Posterior vena cava (tissue), 2 donors: ENCODE measurements at regions of chr5 and their contacts with region 1.

Region 1: DNA sequence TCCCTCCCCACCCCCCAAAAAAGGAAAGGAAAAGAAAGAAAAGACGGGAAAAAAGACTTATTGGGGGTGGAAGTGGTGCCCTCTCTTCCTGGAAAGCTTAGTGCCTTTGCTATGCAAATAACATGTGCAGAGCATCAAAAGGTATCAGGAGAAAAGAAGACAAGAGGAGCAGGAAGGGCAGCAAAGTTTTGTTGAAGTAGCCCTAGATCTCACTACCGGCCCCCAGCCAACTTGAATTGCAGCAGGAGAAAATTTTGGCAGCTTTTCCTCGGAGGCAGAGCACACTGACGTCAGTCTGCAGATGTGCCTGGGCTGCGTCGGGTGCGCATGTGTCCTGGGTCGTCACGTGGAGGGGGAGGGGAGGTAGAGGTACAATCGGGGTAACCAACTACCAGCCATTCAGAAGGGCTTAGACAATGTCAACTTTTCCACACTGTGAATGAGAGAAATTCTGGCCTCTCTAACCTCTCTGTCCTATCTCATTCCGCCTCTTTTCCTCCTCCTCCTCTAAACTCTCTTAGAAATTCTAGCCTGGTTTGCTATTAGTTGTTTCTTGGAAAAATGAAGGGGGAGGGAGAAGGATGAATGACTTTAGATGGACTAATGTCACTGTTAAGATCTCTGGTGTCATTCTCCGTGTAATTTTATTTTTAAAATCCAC is at the start of gene ADAMTS6:
- DNase-seq: peak; percentile 97
- total RNA-seq, gene ADAMTS6: 5.5 to 14.4 TPM

Region 2: DNA sequence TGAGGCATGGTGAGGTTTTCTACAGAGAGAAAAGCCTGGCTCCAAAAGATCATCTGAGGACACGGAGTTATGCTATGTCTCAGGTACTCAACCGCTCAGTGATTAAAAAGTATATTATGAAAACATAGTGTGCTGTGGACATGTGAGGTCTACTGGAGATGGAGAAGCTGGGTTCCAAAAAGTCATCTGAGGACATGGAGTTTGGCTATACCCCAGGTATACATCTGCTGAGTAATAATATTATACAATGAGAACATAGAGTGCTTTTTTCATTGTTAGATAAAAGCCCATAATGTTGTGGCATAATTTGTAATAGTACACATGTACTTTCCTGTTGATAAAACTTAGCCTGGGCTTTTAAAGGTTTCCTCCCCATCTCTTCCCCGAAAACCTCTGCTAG is 862.2 kb before region 1 on chr5:
- intact Hi-C with region 1: loop called in 1 of 2 experiments (anchors 5 kb)
- DNase-seq: no peak

Region 3: GRCh38 chr5:64634997-64635686 is 846.6 kb before region 1 on chr5:
- intact Hi-C with region 1: loop called in 1 of 2 experiments (anchors 10 kb)
- DNase-seq: no peak

Region 4: GRCh38 chr5:64811050-64811640 is 670.6 kb before region 1 on chr5:
- intact Hi-C with region 1: loop called (anchors 10 kb)
- DNase-seq: no peak

Region 5: DNA sequence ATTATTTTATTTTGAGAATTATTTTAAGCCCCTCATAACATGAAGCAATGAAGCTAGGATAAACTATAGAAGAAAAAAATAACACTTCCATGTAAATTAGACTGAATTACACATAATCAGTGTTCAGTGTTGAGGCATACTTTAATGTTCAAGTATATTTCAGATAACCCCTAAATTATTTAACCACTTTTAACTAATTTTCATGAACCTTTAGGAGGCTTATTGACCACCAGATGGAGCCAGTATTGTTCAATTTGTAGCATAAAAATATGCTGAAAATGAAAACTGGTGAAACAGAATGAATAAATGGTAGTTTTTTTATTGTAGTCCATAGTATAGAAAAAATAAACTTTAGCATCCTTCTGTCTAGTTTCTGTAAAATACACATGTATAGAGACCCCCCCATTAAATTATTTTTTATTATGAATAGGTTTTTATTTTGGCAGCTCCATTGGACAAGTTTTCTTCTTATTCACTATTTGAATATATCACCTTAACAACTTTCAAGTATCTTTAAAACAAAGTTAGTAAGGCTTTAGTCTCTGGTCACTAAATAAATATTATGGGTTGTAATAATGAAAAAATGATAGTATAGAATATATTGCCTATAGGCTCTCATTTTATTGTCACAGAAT is 522.9 kb before region 1 on chr5:
- intact Hi-C with region 1: loop called (anchors 10 kb)
- DNase-seq: no peak

Region 6: DNA sequence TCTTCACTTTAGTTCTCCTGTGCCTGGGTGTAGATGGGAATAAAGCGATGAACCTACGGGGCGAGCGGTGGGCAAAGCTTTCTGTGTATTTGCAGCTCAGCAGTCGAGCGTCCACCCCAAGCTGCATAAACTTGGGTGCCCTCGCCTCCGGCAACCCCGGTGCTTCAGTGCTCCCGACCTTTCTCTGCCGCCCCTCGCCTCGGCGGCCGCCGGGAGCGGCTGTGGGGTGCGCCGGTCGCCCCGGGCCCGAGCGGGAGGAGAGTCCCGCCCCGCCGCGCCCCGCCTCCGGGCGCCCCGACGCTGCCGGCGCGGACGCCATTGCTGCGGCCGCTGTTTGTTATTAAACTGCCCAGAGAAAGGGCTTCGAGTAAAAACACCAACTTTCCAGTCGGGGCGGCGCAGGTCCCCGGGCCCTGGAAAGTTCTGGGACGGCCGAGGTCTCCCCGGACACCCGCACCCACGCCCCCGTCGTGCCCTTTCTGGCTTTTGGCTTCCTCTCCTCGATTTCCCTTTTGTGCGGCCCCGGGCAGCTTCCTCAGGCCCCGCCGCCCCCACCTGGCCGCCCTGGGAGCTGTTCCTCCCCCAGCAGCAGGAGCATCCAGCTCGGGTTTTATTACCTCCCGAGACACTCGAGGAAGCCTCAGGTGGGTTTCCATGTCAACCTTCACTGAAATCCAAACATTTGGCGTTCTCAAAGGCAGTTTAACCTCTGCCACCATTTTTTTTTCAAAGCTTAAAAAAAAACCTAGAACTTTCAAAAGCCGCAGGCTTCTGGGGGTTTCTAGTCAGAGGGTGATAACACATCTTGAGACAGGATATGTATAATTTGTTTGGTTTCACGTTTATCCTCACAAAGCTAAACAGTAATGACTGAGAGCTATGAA is 378.7 kb before region 1 on chr5:
- intact Hi-C with region 1: loop called (anchors 10 kb)
- DNase-seq: peak; percentile 85

Region 7: GRCh38 chr5:65410731-65411130 is 71.0 kb before region 1 on chr5:
- intact Hi-C with region 1: no loop called
- DNase-seq: no peak

Region 8: DNA sequence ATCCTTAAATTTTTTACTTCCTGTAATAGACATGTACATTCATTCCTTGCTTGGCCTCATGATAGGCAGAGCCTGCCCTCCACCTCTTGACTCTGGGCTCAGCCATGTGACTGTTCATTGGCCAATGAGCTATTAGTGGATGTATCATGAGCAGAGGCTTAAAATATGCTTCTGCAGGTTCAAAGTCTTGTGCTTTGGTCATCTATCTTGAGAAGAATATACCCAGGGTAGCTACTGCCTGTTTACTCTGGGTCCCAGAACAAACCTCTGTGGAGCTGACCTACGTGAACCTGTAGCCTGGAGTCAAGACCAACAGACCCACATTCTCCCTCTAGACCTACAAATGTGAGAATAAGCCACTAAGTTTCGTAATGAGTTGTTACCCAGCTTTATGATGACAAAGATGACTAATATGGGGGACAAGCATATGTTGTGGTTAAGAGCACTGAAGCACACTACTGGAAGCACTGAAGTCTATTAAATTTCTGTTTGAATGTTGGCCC is 1358.8 kb after region 1 on chr5:
- intact Hi-C with region 1: no loop called
- DNase-seq: no peak